Heart right ventricle (tissue), 16 donors: ENCODE measurements at regions of chr2 and their contacts with region 1.

Region 1: GRCh38 chr2:177636672-177637071 is 244.1 kb downstream of the AGPS start:
- DNase-seq: no peak
- ATAC-seq: no peak
- H3K4me3 ChIP-seq: no peak overlapping the region
- H3K27ac ChIP-seq: no peak overlapping the region
- H3K4me1 ChIP-seq: peaks cover 0 to 29% (median 9%) of the 10 kb centered on the region in 9 donors
- H3K27me3 ChIP-seq: no peaks in the 10 kb centered on the region
- CTCF ChIP-seq: no peak

Region 2: DNA sequence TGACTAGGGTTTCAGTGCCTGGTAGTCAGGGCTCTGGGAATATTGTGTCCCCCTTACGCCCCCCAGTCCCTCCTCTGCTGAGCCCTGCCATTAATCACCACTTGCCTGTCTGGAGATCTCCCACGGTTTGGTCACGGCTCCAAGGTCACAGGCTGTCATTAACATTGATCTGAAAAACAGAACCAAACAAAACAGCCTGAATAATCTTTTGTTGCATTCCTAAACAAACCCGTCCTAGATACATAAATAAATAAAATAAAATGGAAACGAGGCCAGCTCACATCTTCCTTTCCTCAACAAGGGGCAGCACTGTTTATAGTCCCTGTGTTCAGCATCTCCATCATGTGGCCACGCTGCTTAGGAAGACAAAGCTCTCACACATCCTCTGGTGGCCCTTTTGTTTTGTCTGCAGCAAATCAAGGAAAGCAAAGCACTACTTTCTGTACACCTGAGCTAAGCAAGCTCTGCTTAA is 38.7 kb after region 1 on chr2:
- intact Hi-C with region 1: loop called in 1 of 10 experiments (anchors 5 kb)
- DNase-seq: no peak
- ATAC-seq: no peak
- H3K4me3 ChIP-seq: no peak overlapping the region
- H3K27ac ChIP-seq: no peak overlapping the region
- H3K4me1 ChIP-seq: peaks cover 0 to 41% (median 10%) of the 10 kb centered on the region in 9 donors
- H3K27me3 ChIP-seq: no peaks in the 10 kb centered on the region
- CTCF ChIP-seq: peak in 2 of 9 donors; percentile 10 to 17